Vagina (tissue), 2 donors: ENCODE measurements at regions of chr11 and their contacts with region 1.

Region 1: DNA sequence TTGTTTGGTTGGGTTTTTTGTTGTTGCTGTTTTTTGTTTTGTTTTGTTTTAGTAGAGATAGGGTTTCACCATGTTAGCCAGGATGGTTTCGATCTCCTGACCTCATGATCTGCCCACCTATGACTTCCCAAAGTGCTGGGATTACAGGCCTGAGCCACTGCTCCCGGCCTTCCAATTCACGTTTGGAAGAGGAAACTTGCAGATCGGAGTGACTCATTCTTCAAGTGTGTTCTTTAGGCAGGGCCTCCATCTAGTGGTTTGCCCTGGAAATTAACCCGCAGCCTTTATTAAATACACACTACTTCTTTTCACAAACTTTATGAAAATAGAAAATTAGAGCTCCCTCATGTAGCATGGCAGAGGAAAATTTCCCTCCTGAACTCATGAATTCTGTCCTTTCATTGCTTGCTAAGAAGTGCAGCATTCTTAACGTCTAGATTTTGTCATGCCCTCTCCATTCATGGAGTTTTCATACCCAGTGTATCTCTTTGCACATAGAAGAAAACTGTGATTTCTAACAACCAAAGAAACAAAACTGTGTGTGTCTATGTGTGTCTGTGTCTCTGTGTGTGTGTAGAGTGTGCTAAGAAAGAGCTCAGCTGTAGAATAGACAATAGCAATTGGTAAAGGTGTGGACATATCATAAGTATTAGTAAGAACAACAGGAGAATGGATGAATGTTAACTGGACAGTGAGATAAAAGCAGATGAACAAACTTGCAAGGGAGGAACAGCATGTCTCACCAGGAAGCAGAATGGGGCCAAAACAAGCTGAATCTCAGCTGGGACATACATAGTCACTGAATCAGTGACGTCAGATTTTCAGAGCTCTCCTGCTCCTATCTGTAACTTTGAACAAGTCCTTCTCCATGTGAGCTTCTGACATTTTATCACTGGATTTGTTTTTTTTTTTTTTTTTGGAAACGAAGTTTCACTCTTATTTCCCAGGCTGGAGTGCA is 118.4 kb downstream of the BBOX1 start:
- DNase-seq: no peak
- H3K4me3 ChIP-seq: no peak overlapping the region
- H3K27ac ChIP-seq: no peak overlapping the region
- H3K4me1 ChIP-seq: no peaks in the 10 kb centered on the region
- H3K27me3 ChIP-seq: no peaks in the 10 kb centered on the region
- CTCF ChIP-seq: peak; percentile 58 to 82 (median 71)
- POLR2A ChIP-seq: no peak

Region 2: GRCh38 chr11:26753723-26754504 is 405.1 kb before region 1 on chr11:
- intact Hi-C with region 1: loop called (anchors 2 kb)
- DNase-seq: no peak
- H3K4me3 ChIP-seq: no peak overlapping the region
- H3K27ac ChIP-seq: no peak overlapping the region
- H3K4me1 ChIP-seq: no peaks in the 10 kb centered on the region
- H3K27me3 ChIP-seq: no peaks in the 10 kb centered on the region
- CTCF ChIP-seq: peak; percentile 45 to 86 (median 54)
- POLR2A ChIP-seq: no peak

Region 3: GRCh38 chr11:27052668-27053067 is 106.3 kb before region 1 on chr11:
- intact Hi-C with region 1: no loop called
- DNase-seq: no peak
- H3K4me3 ChIP-seq: no peak overlapping the region
- H3K27ac ChIP-seq: no peak overlapping the region
- H3K4me1 ChIP-seq: no peaks in the 10 kb centered on the region
- H3K27me3 ChIP-seq: no peaks in the 10 kb centered on the region
- CTCF ChIP-seq: no peak
- POLR2A ChIP-seq: no peak